ENCODE measurements at regions of chr12 and their contacts with region 1.

Region 1: GRCh38 chr12:56593909-56594621 is 36.1 kb downstream of the BAZ2A start:
- DNase-seq: peak; percentile 66 to 82 (median 74)
- H3K4me3 ChIP-seq: no peak overlapping the region
- H3K27ac ChIP-seq: no peak overlapping the region
- H3K4me1 ChIP-seq: peaks cover 0 to 6% (median under 1%) of the 10 kb centered on the region in 4 experiments
- H3K27me3 ChIP-seq: no peaks in the 10 kb centered on the region

Region 2: DNA sequence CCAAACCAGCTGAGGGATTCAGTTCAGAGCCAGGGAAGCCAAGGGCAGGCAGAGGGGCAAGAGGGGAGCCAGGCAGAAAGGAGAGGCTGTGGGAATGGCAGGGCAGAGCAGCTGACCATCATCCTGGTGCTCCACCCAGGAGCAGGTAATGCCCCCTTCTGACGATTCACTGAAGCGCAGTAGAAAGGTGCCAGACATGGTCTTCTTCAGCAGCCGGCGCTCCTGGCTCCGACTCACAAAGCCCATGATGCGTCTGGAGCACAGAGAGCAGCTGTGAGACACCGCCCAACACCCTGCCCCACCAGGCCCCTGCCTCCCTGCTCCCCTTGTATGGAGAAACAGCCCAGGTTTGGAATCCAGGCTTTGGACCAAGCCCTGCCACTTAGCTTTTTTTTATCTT is 247.4 kb before region 1 on chr12:
- CTCF ChIA-PET with region 1: no interaction called
- POLR2A ChIA-PET with region 1: no interaction called
- DNase-seq: no peak
- H3K4me3 ChIP-seq: no peak overlapping the region
- H3K27ac ChIP-seq: no peak overlapping the region
- H3K4me1 ChIP-seq: no peaks in the 10 kb centered on the region
- H3K27me3 ChIP-seq: no peaks in the 10 kb centered on the region

Region 3: DNA sequence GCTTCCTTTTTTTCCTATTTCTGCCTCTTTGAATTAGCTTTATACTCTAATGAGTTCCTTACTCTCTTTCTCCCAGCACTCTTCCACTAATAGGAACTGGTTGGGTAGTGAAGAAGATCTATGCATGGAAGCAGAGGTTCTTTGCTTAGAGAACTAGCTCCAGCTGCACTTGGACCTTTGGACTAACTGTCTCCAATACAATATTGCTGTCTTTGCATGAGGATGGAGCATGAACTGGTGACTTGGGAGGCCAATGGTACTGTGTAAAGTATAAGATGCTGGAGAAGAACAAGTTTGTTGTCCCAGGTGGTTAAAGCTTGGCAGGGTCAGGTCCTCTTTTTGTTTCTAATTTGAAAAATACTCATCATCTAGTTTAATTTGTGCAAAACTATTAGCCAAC is 103.7 kb before region 1 on chr12:
- CTCF ChIA-PET with region 1: interaction called, 10 read pairs
- POLR2A ChIA-PET with region 1: no interaction called
- DNase-seq: no peak
- H3K4me3 ChIP-seq: no peak overlapping the region
- H3K27ac ChIP-seq: no peak overlapping the region
- H3K4me1 ChIP-seq: peaks cover 0 to 16% (median 15%) of the 10 kb centered on the region in 4 experiments
- H3K27me3 ChIP-seq: peaks cover 9 to 43% (median 16%) of the 10 kb centered on the region in 5 experiments

Region 4: DNA sequence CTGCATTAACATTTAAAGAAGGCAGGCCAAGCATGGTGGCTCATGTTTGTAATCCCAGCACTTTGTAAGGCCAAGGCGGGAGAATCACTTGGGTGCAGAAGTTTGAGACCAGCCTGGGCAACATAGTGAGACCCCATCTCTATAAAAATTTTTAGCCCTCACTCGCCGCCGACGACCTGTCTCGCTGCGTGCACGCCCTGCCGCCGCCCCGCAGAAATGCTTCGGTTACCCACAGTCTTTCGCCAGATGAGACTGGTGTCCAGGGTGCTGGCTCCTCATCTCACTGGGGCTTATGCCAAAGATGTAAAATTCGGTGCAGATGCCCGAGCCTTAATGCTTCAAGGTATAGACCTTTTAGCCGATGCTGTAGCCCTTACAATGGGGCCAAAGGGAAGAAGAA is 83.3 kb before region 1 on chr12:
- CTCF ChIA-PET with region 1: interaction called, 350 read pairs
- POLR2A ChIA-PET with region 1: no interaction called
- DNase-seq: no peak
- H3K4me3 ChIP-seq: no peak overlapping the region
- H3K27ac ChIP-seq: no peak overlapping the region
- H3K4me1 ChIP-seq: peaks cover 0 to 4% (median 0%) of the 10 kb centered on the region in 4 experiments
- H3K27me3 ChIP-seq: no peaks in the 10 kb centered on the region

Region 5: GRCh38 chr12:56521590-56522371 is 72.3 kb before region 1 on chr12 and contains the start of gene RBMS2:
- CTCF ChIA-PET with region 1: interaction called, 350 read pairs
- POLR2A ChIA-PET with region 1: no interaction called
- DNase-seq: peak; percentile 80 to 93 (median 86)
- H3K4me3 ChIP-seq: peak within 1 kb of the TSS in 6 of 7 experiments; percentile 67 to 93 (median 74)
- H3K27ac ChIP-seq: peak within 1 kb of the TSS; percentile 75 to 83
- H3K4me1 ChIP-seq: peaks cover 9 to 34% (median 20%) of the 10 kb centered on the region in 4 experiments
- H3K27me3 ChIP-seq: no peaks in the 10 kb centered on the region

Region 6: DNA sequence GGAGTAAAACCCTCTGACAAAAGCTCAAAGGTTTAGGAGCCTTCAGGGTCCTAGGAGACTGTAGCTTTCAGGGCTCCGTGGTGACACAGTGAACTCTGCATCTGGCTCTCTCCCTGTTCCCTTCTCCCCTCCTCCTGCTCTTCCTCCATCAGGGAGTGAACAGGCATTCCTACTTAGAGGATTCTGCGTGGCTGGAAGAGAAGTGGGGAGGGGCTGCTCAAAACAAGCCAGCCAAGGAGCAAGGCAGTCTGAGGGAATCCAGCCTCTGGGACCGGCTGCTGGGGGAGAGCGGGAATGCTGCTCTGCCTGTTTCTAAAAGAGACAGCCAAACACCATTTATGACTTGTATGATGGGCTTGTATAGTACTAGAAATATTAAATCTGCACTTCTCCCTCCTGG is 22.9 kb before region 1 on chr12:
- CTCF ChIA-PET with region 1: interaction called, 27 read pairs
- POLR2A ChIA-PET with region 1: interaction called, 4 read pairs
- DNase-seq: no peak
- H3K4me3 ChIP-seq: no peak overlapping the region
- H3K27ac ChIP-seq: no peak overlapping the region
- H3K4me1 ChIP-seq: peaks cover 4 to 47% (median 14%) of the 10 kb centered on the region in 4 experiments
- H3K27me3 ChIP-seq: no peaks in the 10 kb centered on the region

Region 7: DNA sequence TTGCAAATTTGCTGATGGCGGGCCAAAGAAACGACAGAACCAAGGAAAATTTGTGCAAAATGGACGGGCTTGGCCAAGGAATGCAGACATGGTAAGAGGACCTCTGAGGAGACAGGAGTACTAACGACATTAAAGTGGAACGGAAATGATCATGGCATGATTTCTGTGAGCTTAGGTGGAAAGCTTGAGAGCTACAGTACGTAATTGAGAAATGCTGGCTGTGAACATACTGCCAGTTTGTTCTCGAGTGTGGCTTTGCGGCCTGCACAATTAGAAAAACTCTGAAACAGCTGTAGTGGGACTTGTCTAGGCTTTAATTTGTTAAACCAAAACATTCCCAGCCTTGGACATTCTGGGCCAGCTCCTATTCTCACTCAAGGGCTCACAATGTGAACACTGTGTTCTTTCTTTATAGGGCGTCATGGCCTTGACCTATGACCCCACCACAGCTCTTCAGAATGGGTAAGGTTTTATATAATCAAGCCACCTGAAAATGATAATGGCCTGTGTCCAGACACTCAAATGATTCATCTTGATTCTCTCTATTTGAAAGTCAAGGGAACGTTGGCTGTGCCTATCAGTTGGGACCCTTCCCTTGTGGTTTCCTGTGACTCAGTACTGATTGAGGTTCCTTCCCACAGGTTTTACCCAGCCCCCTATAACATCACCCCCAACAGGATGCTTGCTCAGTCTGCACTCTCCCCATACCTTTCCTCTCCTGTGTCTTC is 12.5 kb before region 1 on chr12:
- CTCF ChIA-PET with region 1: interaction called, 57 read pairs
- POLR2A ChIA-PET with region 1: interaction called, 6 read pairs
- DNase-seq: peak; percentile 82 to 93 (median 88)
- H3K4me3 ChIP-seq: peak overlapping the region in 2 of 7 experiments; percentile 1 to 12
- H3K27ac ChIP-seq: peak overlapping the region in 1 of 2 experiments; percentile 67
- H3K4me1 ChIP-seq: peaks cover 10 to 27% (median 21%) of the 10 kb centered on the region in 4 experiments
- H3K27me3 ChIP-seq: no peaks in the 10 kb centered on the region

Region 8: GRCh38 chr12:56636675-56637540 is 42.8 kb after region 1 on chr12:
- CTCF ChIA-PET with region 1: interaction called, 316 read pairs
- POLR2A ChIA-PET with region 1: no interaction called
- DNase-seq: peak; percentile 99 to 100 (median 99)
- H3K4me3 ChIP-seq: peak overlapping the region; percentile 44 to 95 (median 84)
- H3K27ac ChIP-seq: peak overlapping the region; percentile 81 to 89
- H3K4me1 ChIP-seq: peaks cover 13 to 61% (median 48%) of the 10 kb centered on the region in 4 experiments
- H3K27me3 ChIP-seq: no peaks in the 10 kb centered on the region

Measured in common myeloid progenitor, CD34-positive (primary cell).